H1 (cell line): ENCODE measurements at regions of chr16 and their contacts with region 1.

Region 1: GRCh38 chr16:57416122-57416509 is 11.5 kb downstream of the CCL17 start:
- DNase-seq: no peak
- H3K4me3 ChIP-seq: peak overlapping the region in 2 of 4 experiments; percentile 19 to 57; a peak in 5 of 8 replicates
- H3K27ac ChIP-seq: no peak overlapping the region
- H3K4me1 ChIP-seq: peaks cover 0 to 12% (median 7%) of the 10 kb centered on the region in 4 experiments; a peak in 6 of 7 replicates
- H3K27me3 ChIP-seq: no peaks in the 10 kb centered on the region
- CTCF ChIP-seq: no peak
- EP300 ChIP-seq: no peak
- POLR2A ChIP-seq: no peak
- RAD21 ChIP-seq: no peak

Region 2: GRCh38 chr16:57316390-57317017 is 99.6 kb before region 1 on chr16:
- CTCF ChIA-PET with region 1: interaction called, 513 read pairs
- POLR2A ChIA-PET with region 1: interaction called, 3 read pairs
- DNase-seq: peak in 1 of 2 experiments; percentile 23
- H3K4me3 ChIP-seq: no peak overlapping the region
- H3K27ac ChIP-seq: no peak overlapping the region
- H3K4me1 ChIP-seq: peaks cover 2 to 6% (median 4%) of the 10 kb centered on the region in 4 experiments; a peak in 4 of 7 replicates
- H3K27me3 ChIP-seq: no peaks in the 10 kb centered on the region
- CTCF ChIP-seq: no peak
- EP300 ChIP-seq: no peak
- POLR2A ChIP-seq: no peak
- RAD21 ChIP-seq: no peak

Region 3: DNA sequence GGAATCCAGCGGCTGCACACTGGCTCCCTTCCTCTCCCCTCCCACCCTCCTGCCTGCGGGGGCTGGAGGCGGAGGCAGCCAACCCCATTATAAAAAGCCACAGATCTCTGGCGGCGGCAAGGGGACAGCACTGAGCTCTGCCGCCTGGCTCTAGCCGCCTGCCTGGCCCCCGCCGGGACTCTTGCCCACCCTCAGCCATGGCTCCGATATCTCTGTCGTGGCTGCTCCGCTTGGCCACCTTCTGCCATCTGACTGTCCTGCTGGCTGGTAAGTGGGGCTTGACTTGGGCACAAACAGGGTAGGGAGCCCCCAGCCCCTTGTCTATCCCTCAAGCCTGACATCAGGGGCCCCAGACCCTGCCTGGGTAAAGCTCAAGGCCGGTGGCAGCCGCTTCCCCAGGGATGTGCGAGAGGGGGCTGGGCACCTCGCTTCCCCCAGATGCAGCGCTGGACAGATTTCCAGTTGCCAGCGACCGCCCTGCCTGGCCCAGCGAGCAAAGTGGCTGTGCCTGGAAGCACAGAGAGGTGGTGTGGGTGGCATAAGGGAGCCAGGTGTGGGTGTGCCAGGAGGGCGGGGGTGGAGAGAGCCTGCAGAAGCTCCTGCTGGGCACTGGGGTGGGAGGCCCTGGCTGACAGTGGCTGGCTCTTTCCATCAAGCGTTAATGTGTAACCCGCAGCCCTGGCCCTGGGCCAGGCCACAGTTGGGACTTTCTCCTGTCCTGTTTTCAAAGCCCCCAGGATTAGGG is 43.6 kb before region 1 on chr16 and contains the start of gene CX3CL1:
- CTCF ChIA-PET with region 1: interaction called, 31 read pairs
- POLR2A ChIA-PET with region 1: interaction called, 4 read pairs
- DNase-seq: peak in 1 of 2 experiments; percentile 77
- H3K4me3 ChIP-seq: peak within 1 kb of the TSS in 3 of 4 experiments; percentile 24 to 51 (median 34); a peak in 6 of 8 replicates
- H3K27ac ChIP-seq: no peak within 1 kb of the TSS
- H3K4me1 ChIP-seq: peaks cover 0 to 22% (median 19%) of the 10 kb centered on the region in 4 experiments; a peak in 6 of 7 replicates
- H3K27me3 ChIP-seq: no peaks in the 10 kb centered on the region
- CTCF ChIP-seq: peak; percentile 4 to 25 (median 14); a peak in 3 of 4 replicates
- EP300 ChIP-seq: no peak
- POLR2A ChIP-seq: peak in 1 of 2 experiments; percentile 42; a peak in 1 of 3 replicates
- RAD21 ChIP-seq: peak in 1 of 2 experiments; percentile 22; a peak in 1 of 4 replicates
- total RNA-seq, gene CX3CL1: 1.4 and 1.9 TPM in 2 replicates

Region 4: DNA sequence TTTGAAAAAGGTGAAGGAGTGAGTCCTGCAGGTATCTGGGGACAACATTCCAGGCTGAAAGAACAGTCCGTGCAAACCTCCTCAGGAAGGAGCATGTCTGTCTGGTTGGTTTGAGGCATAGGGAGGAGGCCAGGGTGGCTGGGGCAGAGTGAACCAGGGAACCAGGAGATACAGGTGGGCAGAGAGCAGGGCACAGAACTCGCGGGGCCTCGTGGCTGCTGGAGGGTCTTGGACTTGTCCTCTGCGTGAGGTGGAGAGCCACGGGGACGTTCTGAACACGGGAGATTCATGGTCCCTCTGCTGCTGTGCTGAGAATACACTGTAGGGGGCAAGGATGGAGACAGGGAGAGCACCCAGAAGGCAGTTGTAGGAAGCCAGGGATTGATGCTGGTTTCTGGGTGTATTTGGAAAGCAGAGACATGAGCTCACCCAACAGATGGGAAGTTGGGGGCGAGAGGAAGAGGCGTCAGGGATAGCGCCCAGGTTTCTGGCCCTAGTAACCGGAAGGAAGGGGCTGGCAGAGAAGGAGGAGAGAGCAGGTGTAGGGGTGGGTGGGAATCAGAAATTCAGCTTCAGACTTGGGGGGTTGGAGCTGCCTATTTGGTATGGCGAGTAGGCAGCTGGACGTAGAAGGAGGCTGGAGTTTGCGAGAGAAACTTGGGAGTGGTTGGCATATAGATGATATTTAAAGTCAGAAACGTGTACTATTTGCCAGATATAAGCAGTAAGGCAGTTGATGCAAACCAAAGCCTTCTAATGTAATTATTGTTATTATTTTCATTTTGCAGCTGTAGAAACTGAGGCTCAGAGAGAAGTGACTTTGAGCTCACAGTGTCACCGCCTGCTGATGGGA is 11.9 kb before region 1 on chr16 and contains the start of gene CCL17:
- CTCF ChIA-PET with region 1: interaction called, 71 read pairs
- POLR2A ChIA-PET with region 1: interaction called, 10 read pairs
- DNase-seq: no peak
- H3K4me3 ChIP-seq: no peak within 1 kb of the TSS
- H3K27ac ChIP-seq: no peak within 1 kb of the TSS
- H3K4me1 ChIP-seq: no peaks in the 10 kb centered on the region
- H3K27me3 ChIP-seq: no peaks in the 10 kb centered on the region
- CTCF ChIP-seq: no peak
- EP300 ChIP-seq: no peak
- POLR2A ChIP-seq: no peak
- RAD21 ChIP-seq: no peak
- total RNA-seq, gene CCL17: not detected in 2 replicates

Region 5: GRCh38 chr16:57462209-57462977 is 46.3 kb after region 1 on chr16 and contains the start of gene POLR2C:
- CTCF ChIA-PET with region 1: interaction called, 28 read pairs
- POLR2A ChIA-PET with region 1: interaction called, 3 read pairs
- DNase-seq: peak; percentile 60 to 95
- H3K4me3 ChIP-seq: peak within 1 kb of the TSS; percentile 93 to 97 (median 96)
- H3K27ac ChIP-seq: no peak within 1 kb of the TSS
- H3K4me1 ChIP-seq: no peaks in the 10 kb centered on the region; a peak in 2 of 7 replicates
- H3K27me3 ChIP-seq: no peaks in the 10 kb centered on the region
- CTCF ChIP-seq: peak; percentile 86 to 97 (median 94)
- EP300 ChIP-seq: peak in 1 of 2 experiments; percentile 51; a peak in 1 of 3 replicates
- POLR2A ChIP-seq: peak; percentile 96 to 97
- RAD21 ChIP-seq: peak; percentile 27 to 55; a peak in 3 of 4 replicates
- total RNA-seq, gene POLR2C: 71.2 and 72.5 TPM in 2 replicates

Region 6: DNA sequence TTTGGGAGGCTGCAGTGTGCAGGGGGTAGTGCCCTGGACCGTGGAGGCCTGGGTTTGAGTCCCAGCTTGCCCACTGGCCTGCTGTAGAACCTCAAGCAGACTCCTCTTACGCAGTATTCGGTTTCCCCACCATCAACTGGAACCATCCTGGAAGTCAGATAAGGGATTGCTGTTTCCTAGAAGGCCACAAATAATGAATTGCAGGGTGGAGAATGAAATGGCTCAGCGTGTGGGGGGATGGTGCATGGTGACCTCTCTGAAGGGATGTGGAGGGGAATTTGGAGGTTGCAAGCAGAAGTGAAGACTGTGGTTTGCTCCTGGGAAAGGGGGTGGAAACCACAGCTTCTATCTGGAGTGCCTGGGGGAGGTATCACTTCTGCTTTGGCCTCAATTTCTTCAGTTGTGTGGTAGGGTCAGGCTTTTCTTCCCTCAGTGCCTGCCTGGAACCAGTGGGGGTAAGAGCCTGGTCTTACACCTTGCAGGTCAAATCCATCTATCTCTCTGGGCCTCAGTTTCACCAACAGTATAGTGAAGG is 128.1 kb after region 1 on chr16:
- CTCF ChIA-PET with region 1: no interaction called
- POLR2A ChIA-PET with region 1: no interaction called
- DNase-seq: peak in 1 of 2 experiments; percentile 31
- H3K4me3 ChIP-seq: no peak overlapping the region
- H3K27ac ChIP-seq: no peak overlapping the region
- H3K4me1 ChIP-seq: peaks cover 0 to 2% (median under 1%) of the 10 kb centered on the region in 4 experiments; a peak in 2 of 7 replicates
- H3K27me3 ChIP-seq: peaks cover 0 to 5% (median 1%) of the 10 kb centered on the region in 4 experiments; a peak in 2 of 7 replicates
- CTCF ChIP-seq: no peak
- EP300 ChIP-seq: no peak
- POLR2A ChIP-seq: no peak
- RAD21 ChIP-seq: no peak

Region 7: GRCh38 chr16:57585051-57585687 is 169.1 kb after region 1 on chr16:
- CTCF ChIA-PET with region 1: no interaction called
- POLR2A ChIA-PET with region 1: no interaction called
- DNase-seq: no peak
- H3K4me3 ChIP-seq: no peak overlapping the region
- H3K27ac ChIP-seq: no peak overlapping the region
- H3K4me1 ChIP-seq: no peaks in the 10 kb centered on the region
- H3K27me3 ChIP-seq: peaks cover 0 to 4% (median 0%) of the 10 kb centered on the region in 4 experiments; a peak in 2 of 7 replicates
- CTCF ChIP-seq: no peak
- EP300 ChIP-seq: no peak
- POLR2A ChIP-seq: no peak
- RAD21 ChIP-seq: no peak